ENCODE measurements at regions of chr18 and their contacts with region 1.

Region 1: GRCh38 chr18:50388988-50389387 is 14.1 kb downstream of the SKA1 start:
- DNase-seq: no peak
- H3K4me3 ChIP-seq: no peak overlapping the region
- H3K27ac ChIP-seq: no peak overlapping the region
- H3K4me1 ChIP-seq: no peaks in the 10 kb centered on the region
- H3K27me3 ChIP-seq: no peaks in the 10 kb centered on the region
- CTCF ChIP-seq: no peak

Region 2: GRCh38 chr18:49953391-49953790 is 435.6 kb before region 1 on chr18:
- CTCF ChIA-PET with region 1: no interaction called
- POLR2A ChIA-PET with region 1: interaction called, 12 read pairs
- intact Hi-C with region 1: no loop called
- DNase-seq: no peak
- H3K4me3 ChIP-seq: no peak overlapping the region
- H3K27ac ChIP-seq: no peak overlapping the region
- H3K4me1 ChIP-seq: no peaks in the 10 kb centered on the region
- H3K27me3 ChIP-seq: no peaks in the 10 kb centered on the region
- CTCF ChIP-seq: no peak

Region 3: GRCh38 chr18:50410894-50411293 is 21.9 kb after region 1 on chr18:
- CTCF ChIA-PET with region 1: no interaction called
- POLR2A ChIA-PET with region 1: no interaction called
- intact Hi-C with region 1: no loop called
- DNase-seq: no peak
- H3K4me3 ChIP-seq: no peak overlapping the region
- H3K27ac ChIP-seq: no peak overlapping the region
- H3K4me1 ChIP-seq: no peaks in the 10 kb centered on the region
- H3K27me3 ChIP-seq: no peaks in the 10 kb centered on the region
- CTCF ChIP-seq: no peak